ENCODE measurements at regions of chr6 and their contacts with region 1.

Region 1: DNA sequence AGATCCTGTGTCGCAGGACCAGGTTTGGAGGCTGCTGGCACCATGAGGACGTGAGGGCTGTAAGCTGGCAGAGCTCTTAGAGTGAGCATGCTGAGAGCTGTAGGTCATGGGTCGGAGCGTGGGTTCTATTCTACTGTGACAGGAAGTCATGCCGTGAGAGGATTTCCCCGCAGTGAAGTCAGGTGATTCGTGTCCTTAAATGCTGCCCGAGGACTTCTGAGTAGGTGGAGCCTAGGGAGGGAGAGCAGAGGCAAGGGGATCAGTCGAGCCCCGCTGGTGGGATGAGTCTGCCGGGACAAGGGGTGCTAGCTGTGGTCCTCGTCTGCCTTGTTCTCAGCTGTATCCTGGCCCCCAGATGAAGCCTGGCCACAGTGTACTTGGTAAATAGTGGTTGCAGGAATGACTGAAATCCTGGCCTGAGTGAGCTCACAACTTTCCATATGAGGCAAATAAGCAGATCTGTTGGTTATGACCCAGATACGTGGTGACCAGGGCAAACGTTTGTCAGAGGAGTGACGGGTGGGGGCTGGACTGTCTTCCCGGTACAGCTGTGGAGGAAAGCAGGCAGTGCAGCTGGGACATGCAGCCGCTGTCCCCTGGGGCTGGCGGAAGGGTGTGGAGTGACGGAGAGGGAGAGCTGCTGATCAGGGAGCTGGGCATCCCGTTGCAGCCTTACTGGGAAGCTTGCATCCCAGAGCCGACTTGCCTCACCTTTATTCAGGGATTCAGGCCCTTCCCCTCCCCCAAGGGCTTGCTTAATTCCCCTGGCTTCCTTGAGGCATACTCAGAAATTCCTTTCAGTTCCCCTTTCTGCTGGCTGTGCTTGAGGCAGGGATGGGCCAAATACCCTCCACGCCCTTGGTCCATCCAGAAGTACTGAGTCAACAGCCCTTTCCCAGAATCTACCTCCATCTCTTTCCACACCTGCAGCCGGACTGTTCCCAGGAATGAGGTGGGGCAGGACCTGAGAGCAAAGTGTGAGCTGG is 250.9 kb upstream of the RREB1 start:
- DNase-seq: peak; percentile 45
- H3K4me3 Mint-ChIP-seq: peak overlapping the region; percentile 65
- H3K27ac Mint-ChIP-seq: peak overlapping the region; percentile 89
- H3K4me1 Mint-ChIP-seq: peaks cover 42% of the 10 kb centered on the region
- H3K27me3 Mint-ChIP-seq: peaks cover 8% of the 10 kb centered on the region

Region 2: GRCh38 chr6:6749702-6750491 is 106.9 kb before region 1 on chr6:
- intact Hi-C with region 1: loop called (anchors 5 kb)
- DNase-seq: peak; percentile 42
- H3K4me3 Mint-ChIP-seq: peak overlapping the region; percentile 67
- H3K27ac Mint-ChIP-seq: peak overlapping the region; percentile 61
- H3K4me1 Mint-ChIP-seq: peaks cover 30% of the 10 kb centered on the region
- H3K27me3 Mint-ChIP-seq: peaks cover 13% of the 10 kb centered on the region

Measured in activated T-helper 1 cell treated with anti-CD3 and anti-CD28 coated beads, Interleukin-12 subunit alpha, Interleukin-12 subunit beta, Interleukin-2, Interleukin-4 antibody, amounts not matched to agents 30 ng/mL and 10 ng/mL and 1 ng/mL, durations not matched to agents 14 hours and 24 hours and 36 hours (primary cell).